ENCODE measurements at regions of chr1 and their contacts with region 1.

Region 1: DNA sequence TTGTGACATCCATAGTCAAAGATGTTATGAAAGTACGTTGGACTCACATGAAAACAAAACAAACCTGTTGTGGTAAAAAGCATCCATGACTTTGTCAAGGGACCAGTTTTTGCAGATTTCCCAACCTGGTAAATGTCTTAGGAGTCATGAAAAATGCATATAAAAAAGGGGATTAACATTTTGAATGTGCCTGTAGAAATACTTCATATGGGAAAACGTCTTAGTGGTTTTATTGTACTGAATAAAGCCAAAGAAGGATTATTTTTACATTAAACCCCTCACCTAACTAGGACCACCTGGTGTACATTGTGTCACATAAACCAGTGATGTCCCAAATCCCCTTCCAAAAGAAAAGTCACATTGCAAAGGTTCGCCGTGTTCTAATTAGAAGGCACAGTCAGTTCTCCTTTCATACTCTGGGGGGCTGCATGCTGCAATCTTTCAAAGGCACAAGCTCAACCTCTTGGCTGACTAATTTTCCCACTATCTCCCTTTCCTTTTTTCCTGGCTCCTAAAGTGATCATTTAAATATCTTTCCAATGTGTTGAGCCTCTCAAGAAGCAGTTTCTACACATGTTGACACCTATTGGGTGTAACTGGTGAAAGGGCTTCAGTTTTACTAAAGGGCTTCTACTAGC is 119.8 kb upstream of the SPAG17 start:
- DNase-seq: no peak
- ATAC-seq: peak in 3 of 4 donors; percentile 45 to 66 (median 64)
- H3K4me3 ChIP-seq: no peak overlapping the region
- H3K27ac ChIP-seq: no peak overlapping the region
- H3K4me1 ChIP-seq: peaks cover 0 to 22% (median 8%) of the 10 kb centered on the region in 12 donors
- H3K27me3 ChIP-seq: no peaks in the 10 kb centered on the region
- CTCF ChIP-seq: peak in 11 of 12 donors; percentile 16 to 57 (median 41)
- POLR2A ChIP-seq: no peak

Region 2: DNA sequence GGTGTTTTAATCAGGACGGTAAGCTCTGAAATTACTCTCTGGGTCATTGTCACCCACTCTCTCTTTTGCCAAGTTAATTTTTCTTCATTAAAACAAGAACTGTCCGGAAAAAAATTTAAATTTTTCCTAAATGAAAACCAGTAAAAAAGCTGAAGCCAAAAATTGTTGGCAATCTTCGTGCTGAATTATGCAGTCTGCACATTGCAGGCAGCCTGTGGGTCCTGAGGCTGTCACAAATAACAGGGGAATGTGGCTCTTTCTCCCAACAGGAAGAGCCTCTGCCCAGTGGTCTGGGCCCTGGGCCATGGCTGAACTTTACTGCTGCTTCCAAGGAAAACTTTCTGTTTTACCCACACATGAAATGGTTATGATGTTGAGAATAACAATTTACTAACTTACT is 34.1 kb after region 1 on chr1:
- intact Hi-C with region 1: no loop called
- DNase-seq: no peak
- ATAC-seq: no peak
- H3K4me3 ChIP-seq: no peak overlapping the region
- H3K27ac ChIP-seq: no peak overlapping the region
- H3K4me1 ChIP-seq: no peaks in the 10 kb centered on the region
- H3K27me3 ChIP-seq: no peaks in the 10 kb centered on the region
- CTCF ChIP-seq: no peak
- POLR2A ChIP-seq: no peak

Region 3: GRCh38 chr1:118716782-118717181 is 411.9 kb after region 1 on chr1:
- intact Hi-C with region 1: loop called in 1 of 10 experiments (anchors 10 kb)
- DNase-seq: no peak
- ATAC-seq: no peak
- H3K4me3 ChIP-seq: no peak overlapping the region
- H3K27ac ChIP-seq: no peak overlapping the region
- H3K4me1 ChIP-seq: peaks cover 0 to 8% (median 0%) of the 10 kb centered on the region in 12 donors
- H3K27me3 ChIP-seq: no peaks in the 10 kb centered on the region
- CTCF ChIP-seq: peak in 6 of 12 donors; percentile 12 to 42 (median 26)
- POLR2A ChIP-seq: no peak